Activated T-helper 1 cell treated with anti-CD3 and anti-CD28 coated beads, Interleukin-12 subunit alpha, Interleukin-12 subunit beta, Interleukin-2, Interleukin-4 antibody, amounts not matched to agents 30 ng/mL and 10 ng/mL and 1 ng/mL, durations not matched to agents 14 hours and 24 hours and 36 hours (primary cell): ENCODE measurements at regions of chr18 and their contacts with region 1.

Region 1: GRCh38 chr18:67199993-67200617 is 316.4 kb downstream of the DSEL start:
- DNase-seq: no peak
- H3K4me3 Mint-ChIP-seq: no peak overlapping the region
- H3K27ac Mint-ChIP-seq: no peak overlapping the region
- H3K4me1 Mint-ChIP-seq: no peaks in the 10 kb centered on the region
- H3K27me3 Mint-ChIP-seq: no peaks in the 10 kb centered on the region

Region 2: GRCh38 chr18:67104700-67105284 is 95.3 kb before region 1 on chr18:
- intact Hi-C with region 1: loop called (anchors 1 kb)
- DNase-seq: no peak
- H3K4me3 Mint-ChIP-seq: no peak overlapping the region
- H3K27ac Mint-ChIP-seq: no peak overlapping the region
- H3K4me1 Mint-ChIP-seq: no peaks in the 10 kb centered on the region
- H3K27me3 Mint-ChIP-seq: no peaks in the 10 kb centered on the region

Region 3: GRCh38 chr18:67144329-67144728 is 55.8 kb before region 1 on chr18:
- intact Hi-C with region 1: no loop called
- DNase-seq: no peak
- H3K4me3 Mint-ChIP-seq: no peak overlapping the region
- H3K27ac Mint-ChIP-seq: no peak overlapping the region
- H3K4me1 Mint-ChIP-seq: no peaks in the 10 kb centered on the region
- H3K27me3 Mint-ChIP-seq: no peaks in the 10 kb centered on the region